CD4-positive, alpha-beta memory T cell (primary cell): ENCODE measurements at regions of chr1 and their contacts with region 1.

Region 1: GRCh38 chr1:26695356-26696118 is at the start of gene ARID1A:
- DNase-seq: peak; percentile 96 to 98 (median 97)
- H3K4me3 ChIP-seq: peak within 1 kb of the TSS; percentile 87 to 96
- H3K4me3 Mint-ChIP-seq: peak within 1 kb of the TSS; percentile 88 to 98 (median 94)
- H3K27ac ChIP-seq: peak within 1 kb of the TSS; percentile 76
- H3K27ac Mint-ChIP-seq: peak within 1 kb of the TSS; percentile 94 to 98 (median 96)
- H3K4me1 ChIP-seq: peaks cover 52% of the 10 kb centered on the region
- H3K4me1 Mint-ChIP-seq: peaks cover 19 to 35% (median 29%) of the 10 kb centered on the region in 4 donors
- H3K27me3 ChIP-seq: no peaks in the 10 kb centered on the region
- H3K27me3 Mint-ChIP-seq: no peaks in the 10 kb centered on the region
- total RNA-seq, gene ARID1A: 112 to 127 TPM

Region 2: DNA sequence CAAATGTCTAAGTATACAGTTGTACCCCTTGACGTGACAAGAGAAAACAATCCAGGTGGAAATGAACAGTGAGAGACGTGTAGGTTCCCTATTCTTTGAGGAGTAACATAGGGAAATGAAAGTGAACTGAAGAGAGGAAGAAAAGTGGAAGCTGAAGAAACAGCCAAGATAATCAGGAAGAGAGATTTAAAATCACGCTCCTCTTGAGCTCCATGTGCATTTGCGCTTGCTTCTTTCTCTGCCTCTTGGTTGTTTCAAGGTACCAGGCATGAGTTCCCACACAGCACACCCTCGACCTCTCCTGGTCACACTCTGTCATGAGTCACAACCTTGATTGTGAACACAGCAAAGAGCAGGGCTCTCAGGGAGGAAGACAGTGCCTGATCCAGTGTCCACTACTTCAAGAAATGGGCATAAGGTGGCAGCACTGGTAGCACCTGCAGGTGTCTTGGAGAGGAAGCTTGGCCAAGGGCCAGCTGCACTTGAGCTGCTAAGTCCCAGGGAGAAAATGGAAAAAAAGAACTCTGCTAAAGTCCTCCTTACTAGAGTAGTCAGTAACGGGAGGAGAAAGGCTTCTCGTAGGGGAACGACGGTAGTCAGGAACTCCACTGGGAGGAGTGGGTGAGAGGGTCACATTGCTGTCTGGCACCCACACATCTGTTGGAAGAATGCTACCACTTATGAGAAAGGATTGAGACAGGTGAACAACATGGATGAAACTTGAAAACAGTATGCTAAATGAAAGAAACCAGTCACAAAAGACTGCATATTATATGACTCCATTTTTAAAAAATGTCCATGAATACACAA is 18.0 kb before region 1 on chr1:
- CTCF ChIA-PET with region 1: interaction called, 48 read pairs
- POLR2A ChIA-PET with region 1: interaction called, 45 read pairs
- intact Hi-C with region 1: loop called (anchors 1 kb)
- DNase-seq: peak; percentile 48 to 68 (median 54)
- H3K4me3 ChIP-seq: no peak overlapping the region
- H3K4me3 Mint-ChIP-seq: peak overlapping the region in 7 of 8 donors; percentile 36 to 82 (median 77)
- H3K27ac ChIP-seq: peak overlapping the region; percentile 5
- H3K27ac Mint-ChIP-seq: peak overlapping the region; percentile 24 to 89 (median 74)
- H3K4me1 ChIP-seq: peaks cover 20% of the 10 kb centered on the region
- H3K4me1 Mint-ChIP-seq: peaks cover 11 to 23% (median 14%) of the 10 kb centered on the region in 4 donors
- H3K27me3 ChIP-seq: no peaks in the 10 kb centered on the region
- H3K27me3 Mint-ChIP-seq: no peaks in the 10 kb centered on the region

Region 3: DNA sequence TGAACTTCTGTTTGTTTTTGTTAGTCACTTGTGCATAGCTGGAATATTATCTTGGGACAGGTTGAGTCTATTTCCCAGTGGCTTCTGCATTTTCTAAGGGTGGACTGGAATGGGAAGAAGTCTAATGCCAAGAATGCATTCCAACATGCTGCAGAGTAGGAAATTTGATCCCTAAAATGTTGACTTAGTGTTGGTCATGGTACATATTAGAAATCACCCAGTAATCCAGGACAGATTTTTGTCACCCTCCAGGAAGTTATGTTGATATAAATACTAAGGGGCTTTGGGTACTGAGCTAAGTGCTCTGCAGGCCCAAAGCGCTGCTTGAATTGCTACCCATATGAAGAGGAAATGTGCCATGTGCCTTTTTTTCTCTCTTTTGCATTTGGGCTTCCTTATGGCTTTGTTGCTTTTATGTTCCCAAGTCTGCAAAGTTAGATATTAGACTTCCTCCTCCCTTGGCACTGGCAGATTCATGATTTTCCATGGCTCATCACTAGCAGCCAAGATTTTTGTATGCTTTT is 10.3 kb after region 1 on chr1:
- CTCF ChIA-PET with region 1: interaction called, 9 read pairs
- POLR2A ChIA-PET with region 1: interaction called, 91 read pairs
- intact Hi-C with region 1: loop called (anchors 1 kb)
- DNase-seq: no peak
- H3K4me3 ChIP-seq: peak overlapping the region; percentile 8 to 19
- H3K4me3 Mint-ChIP-seq: peak overlapping the region in 7 of 8 donors; percentile 64 to 82 (median 68)
- H3K27ac ChIP-seq: peak overlapping the region; percentile 18
- H3K27ac Mint-ChIP-seq: peak overlapping the region; percentile 8 to 81 (median 70)
- H3K4me1 ChIP-seq: peaks cover 71% of the 10 kb centered on the region
- H3K4me1 Mint-ChIP-seq: peaks cover 15 to 41% (median 27%) of the 10 kb centered on the region in 4 donors
- H3K27me3 ChIP-seq: no peaks in the 10 kb centered on the region
- H3K27me3 Mint-ChIP-seq: no peaks in the 10 kb centered on the region

Region 4: GRCh38 chr1:26723013-26723991 is 27.8 kb after region 1 on chr1:
- CTCF ChIA-PET with region 1: interaction called, 9 read pairs
- POLR2A ChIA-PET with region 1: interaction called, 46 read pairs
- intact Hi-C with region 1: no loop called
- DNase-seq: peak; percentile 25 to 81 (median 31)
- H3K4me3 ChIP-seq: peak overlapping the region in 1 of 2 donors; percentile 44
- H3K4me3 Mint-ChIP-seq: peak overlapping the region; percentile 44 to 87 (median 74)
- H3K27ac ChIP-seq: peak overlapping the region; percentile 23
- H3K27ac Mint-ChIP-seq: peak overlapping the region; percentile 62 to 92 (median 78)
- H3K4me1 ChIP-seq: peaks cover 96% of the 10 kb centered on the region
- H3K4me1 Mint-ChIP-seq: peaks cover 77 to 94% (median 84%) of the 10 kb centered on the region in 4 donors
- H3K27me3 ChIP-seq: no peaks in the 10 kb centered on the region
- H3K27me3 Mint-ChIP-seq: no peaks in the 10 kb centered on the region

Region 5: DNA sequence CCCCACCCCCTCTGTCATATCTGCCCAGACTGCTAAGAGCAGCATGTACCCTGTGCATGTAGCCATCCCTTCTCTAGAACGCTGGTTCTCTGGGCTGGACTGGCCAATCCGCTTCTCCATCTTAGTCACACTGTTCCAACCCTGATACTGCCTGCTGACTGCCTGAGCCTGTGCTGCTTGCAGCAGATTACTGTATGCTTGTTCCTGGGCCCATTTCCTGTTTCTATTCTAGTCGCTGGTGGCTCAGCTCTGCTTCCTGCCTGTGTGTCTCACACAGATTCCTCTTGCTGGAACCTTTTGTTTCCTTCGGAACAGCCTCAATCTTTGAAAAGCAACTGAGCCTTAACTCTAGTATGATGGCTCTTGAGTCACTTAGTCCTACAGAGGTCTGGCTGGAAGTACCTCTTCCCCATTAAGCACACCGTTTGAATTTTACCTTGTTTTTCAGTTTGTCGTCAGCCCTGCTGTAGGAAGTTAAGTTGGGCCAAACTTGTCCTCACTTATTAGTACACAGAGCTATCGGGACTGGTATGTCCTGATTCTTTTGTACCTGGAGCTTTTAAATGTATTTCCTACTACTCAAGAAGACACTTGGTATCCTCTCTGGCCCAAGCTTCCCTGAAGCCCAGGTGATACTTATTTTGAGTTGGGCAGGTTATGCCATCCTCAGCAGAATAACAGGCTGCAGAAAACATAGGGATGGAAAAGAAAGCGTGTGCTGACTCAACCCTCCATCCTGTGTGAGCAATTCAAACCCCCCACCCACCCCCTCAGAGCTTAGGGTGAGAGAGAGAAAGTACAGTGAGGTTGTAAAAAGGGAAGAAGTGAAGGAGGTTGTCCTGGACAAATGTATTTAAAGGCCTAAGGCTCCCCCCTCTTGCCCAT is 48.8 kb after region 1 on chr1:
- CTCF ChIA-PET with region 1: interaction called, 18 read pairs
- POLR2A ChIA-PET with region 1: interaction called, 307 read pairs
- intact Hi-C with region 1: loop called (anchors 1 kb)
- DNase-seq: peak; percentile 81 to 93 (median 88)
- H3K4me3 ChIP-seq: peak overlapping the region in 1 of 2 donors; percentile 41
- H3K4me3 Mint-ChIP-seq: peak overlapping the region; percentile 5 to 90 (median 79)
- H3K27ac ChIP-seq: peak overlapping the region; percentile 70
- H3K27ac Mint-ChIP-seq: peak overlapping the region; percentile 90 to 98 (median 93)
- H3K4me1 ChIP-seq: peaks cover 95% of the 10 kb centered on the region
- H3K4me1 Mint-ChIP-seq: peaks cover 66 to 93% (median 79%) of the 10 kb centered on the region in 4 donors
- H3K27me3 ChIP-seq: no peaks in the 10 kb centered on the region
- H3K27me3 Mint-ChIP-seq: no peaks in the 10 kb centered on the region

Region 6: DNA sequence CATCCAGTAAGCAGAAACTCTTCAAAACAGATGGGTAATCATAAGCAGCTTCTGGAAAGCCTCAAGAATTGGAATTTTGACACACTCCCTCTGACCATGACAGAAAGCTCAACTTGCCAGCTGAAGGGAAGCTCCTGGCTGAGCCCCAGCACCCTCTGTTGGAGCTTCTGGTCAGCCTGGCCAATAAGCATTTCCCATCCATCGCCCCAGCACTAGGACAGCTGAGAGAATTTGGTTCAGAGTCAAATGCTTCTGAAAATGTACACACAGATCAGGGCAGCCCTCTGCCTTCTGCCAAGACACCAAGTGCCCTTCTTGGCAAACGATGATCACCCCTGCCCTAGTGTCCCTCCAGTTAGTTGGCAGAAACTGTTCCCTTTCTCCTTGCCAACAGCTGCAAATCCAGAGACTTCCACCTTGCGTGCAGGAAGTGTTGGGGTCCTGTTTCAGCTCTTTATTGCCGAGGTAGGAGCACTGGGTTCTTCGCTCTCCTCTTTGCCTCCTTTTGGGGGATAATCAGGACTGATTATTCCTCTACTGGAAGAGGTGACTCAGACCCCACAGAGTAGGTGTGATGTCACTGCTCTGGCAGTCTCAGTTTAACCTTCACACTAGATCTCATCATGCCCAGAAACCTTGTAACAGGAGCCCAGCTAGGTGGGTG is 104.1 kb after region 1 on chr1:
- CTCF ChIA-PET with region 1: interaction called, 3 read pairs
- POLR2A ChIA-PET with region 1: interaction called, 11 read pairs
- intact Hi-C with region 1: no loop called
- DNase-seq: no peak
- H3K4me3 ChIP-seq: no peak overlapping the region
- H3K4me3 Mint-ChIP-seq: peak overlapping the region in 7 of 8 donors; percentile 49 to 83 (median 79)
- H3K27ac ChIP-seq: peak overlapping the region; percentile 30
- H3K27ac Mint-ChIP-seq: peak overlapping the region; percentile 91 to 97 (median 92)
- H3K4me1 ChIP-seq: peaks cover 35% of the 10 kb centered on the region
- H3K4me1 Mint-ChIP-seq: peaks cover 26 to 38% (median 32%) of the 10 kb centered on the region in 4 donors
- H3K27me3 ChIP-seq: no peaks in the 10 kb centered on the region
- H3K27me3 Mint-ChIP-seq: no peaks in the 10 kb centered on the region

Region 7: DNA sequence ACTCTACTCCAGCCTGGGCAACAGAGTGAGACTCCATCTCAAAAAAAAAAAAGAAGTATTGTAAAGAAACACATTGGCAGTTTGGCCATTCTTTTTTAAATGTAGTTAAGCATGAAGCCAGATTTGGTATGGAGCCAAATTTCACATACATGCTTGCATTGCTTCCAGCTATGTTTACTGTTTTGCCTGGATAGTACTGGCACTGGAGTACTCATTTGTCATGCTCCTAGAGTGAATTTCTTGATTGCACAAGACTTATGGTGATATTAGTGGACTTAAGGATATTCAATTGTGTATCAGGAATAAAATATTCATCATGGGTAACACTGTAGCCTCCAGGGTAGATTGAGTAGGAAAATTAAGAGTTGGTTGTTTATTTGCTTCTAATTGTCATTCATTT is 483.8 kb after region 1 on chr1:
- CTCF ChIA-PET with region 1: no interaction called
- POLR2A ChIA-PET with region 1: no interaction called
- intact Hi-C with region 1: no loop called
- DNase-seq: no peak
- H3K4me3 ChIP-seq: no peak overlapping the region
- H3K4me3 Mint-ChIP-seq: no peak overlapping the region
- H3K27ac ChIP-seq: no peak overlapping the region
- H3K27ac Mint-ChIP-seq: no peak overlapping the region
- H3K4me1 ChIP-seq: no peaks in the 10 kb centered on the region
- H3K4me1 Mint-ChIP-seq: no peaks in the 10 kb centered on the region
- H3K27me3 ChIP-seq: no peaks in the 10 kb centered on the region
- H3K27me3 Mint-ChIP-seq: no peaks in the 10 kb centered on the region

Region 8: GRCh38 chr1:28436211-28436769 is 1740.8 kb after region 1 on chr1:
- CTCF ChIA-PET with region 1: no interaction called
- POLR2A ChIA-PET with region 1: no interaction called
- intact Hi-C with region 1: no loop called
- DNase-seq: no peak
- H3K4me3 ChIP-seq: no peak overlapping the region
- H3K4me3 Mint-ChIP-seq: no peak overlapping the region
- H3K27ac ChIP-seq: no peak overlapping the region
- H3K27ac Mint-ChIP-seq: no peak overlapping the region
- H3K4me1 ChIP-seq: peaks cover 10% of the 10 kb centered on the region
- H3K4me1 Mint-ChIP-seq: peaks cover 3 to 7% (median 7%) of the 10 kb centered on the region in 4 donors
- H3K27me3 ChIP-seq: no peaks in the 10 kb centered on the region
- H3K27me3 Mint-ChIP-seq: no peaks in the 10 kb centered on the region